ENCODE measurements at regions of chr12 and their contacts with region 1.

Region 1: GRCh38 chr12:40622246-40622838 is 69.9 kb upstream of the CNTN1 start:
- DNase-seq: no peak
- ATAC-seq: no peak
- H3K4me3 ChIP-seq: no peak overlapping the region
- H3K27ac ChIP-seq: no peak overlapping the region
- H3K4me1 ChIP-seq: no peaks in the 10 kb centered on the region
- H3K27me3 ChIP-seq: no peaks in the 10 kb centered on the region
- CTCF ChIP-seq: peak in 2 of 5 experiments; percentile 27 to 42
- POLR2A ChIP-seq: no peak

Region 2: DNA sequence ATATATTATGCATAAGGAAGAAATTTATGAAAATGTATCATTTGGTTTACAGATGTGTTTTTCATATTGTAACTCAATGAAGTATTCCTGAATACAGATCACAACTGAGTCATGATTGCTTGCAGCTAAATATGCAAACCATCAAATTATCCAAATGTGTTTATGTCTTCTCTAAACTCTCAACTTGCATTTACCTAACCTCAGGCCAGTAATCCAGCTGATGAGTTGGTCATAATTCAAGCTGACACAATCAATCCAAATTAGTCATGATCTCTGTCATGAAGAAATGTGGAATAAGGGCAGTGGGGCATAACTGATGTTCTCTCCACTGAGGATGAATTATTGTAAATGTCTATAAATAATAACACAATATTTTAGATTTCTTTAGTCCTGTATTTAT is 34.9 kb before region 1 on chr12:
- in situ Hi-C with region 1: no loop called
- intact Hi-C with region 1: no loop called
- DNase-seq: no peak
- ATAC-seq: no peak
- H3K4me3 ChIP-seq: no peak overlapping the region
- H3K27ac ChIP-seq: no peak overlapping the region
- H3K4me1 ChIP-seq: no peaks in the 10 kb centered on the region
- H3K27me3 ChIP-seq: no peaks in the 10 kb centered on the region
- CTCF ChIP-seq: no peak
- POLR2A ChIP-seq: no peak

Region 3: DNA sequence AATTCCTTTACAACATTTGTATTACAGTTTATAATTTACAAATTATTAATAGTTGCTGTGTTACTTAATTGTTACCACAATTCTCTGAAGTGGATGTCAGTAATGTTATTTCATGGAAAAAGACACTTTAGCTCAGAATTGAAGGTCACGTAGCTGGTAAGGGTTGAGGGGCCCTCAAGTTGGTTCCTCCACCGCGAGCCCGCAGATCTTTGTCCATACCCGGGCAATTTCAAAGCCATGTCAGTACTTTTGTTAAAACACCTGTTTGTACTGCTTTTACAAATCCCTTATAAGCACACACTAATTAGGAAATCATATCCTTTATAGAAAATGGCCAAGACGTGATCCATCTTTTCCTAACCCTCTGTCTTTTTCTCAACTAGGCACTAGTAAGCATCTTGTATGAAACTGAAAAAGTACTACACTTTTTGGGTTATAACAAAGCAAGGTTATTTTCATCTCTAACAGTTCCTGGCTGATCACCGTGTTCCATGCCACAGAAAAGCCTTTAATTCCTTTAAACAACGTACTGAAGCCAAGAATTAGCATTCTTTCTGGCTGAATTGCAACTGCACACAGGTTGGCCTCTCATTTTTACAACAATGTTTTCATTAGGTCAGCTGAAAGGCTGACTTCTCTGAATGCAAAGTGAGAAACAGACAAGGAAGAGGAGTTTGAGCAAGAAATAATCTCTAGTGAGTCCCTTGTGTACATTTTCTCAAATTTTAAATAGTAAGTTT is 146.0 kb after region 1 on chr12:
- in situ Hi-C with region 1: no loop called
- intact Hi-C with region 1: no loop called
- DNase-seq: no peak
- ATAC-seq: no peak
- H3K4me3 ChIP-seq: no peak overlapping the region
- H3K27ac ChIP-seq: no peak overlapping the region
- H3K4me1 ChIP-seq: no peaks in the 10 kb centered on the region
- H3K27me3 ChIP-seq: no peaks in the 10 kb centered on the region
- CTCF ChIP-seq: no peak
- POLR2A ChIP-seq: no peak

Region 4: GRCh38 chr12:40921563-40922163 is 299.3 kb after region 1 on chr12:
- in situ Hi-C with region 1: loop called in 1 of 4 experiments (anchors 5 kb)
- intact Hi-C with region 1: loop called (anchors 5 kb)
- DNase-seq: no peak
- ATAC-seq: no peak
- H3K4me3 ChIP-seq: no peak overlapping the region
- H3K27ac ChIP-seq: no peak overlapping the region
- H3K4me1 ChIP-seq: no peaks in the 10 kb centered on the region
- H3K27me3 ChIP-seq: no peaks in the 10 kb centered on the region
- CTCF ChIP-seq: peak in 2 of 5 experiments; percentile 38 to 44
- POLR2A ChIP-seq: no peak